ENCODE measurements at regions of chr1 and their contacts with region 1.

Region 1: GRCh38 chr1:46303038-46303871 is at the starts of genes LRRC41 and UQCRH:
- DNase-seq: peak; percentile 93
- H3K4me3 ChIP-seq: peak within 1 kb of the TSS; percentile 69 to 98 (median 94)
- H3K27ac ChIP-seq: peak within 1 kb of the TSS; percentile 92
- H3K4me1 ChIP-seq: peaks cover 24% of the 10 kb centered on the region
- H3K27me3 ChIP-seq: no peaks in the 10 kb centered on the region
- CTCF ChIP-seq: no peak
- total RNA-seq, gene LRRC41: 76.7 to 103 TPM
- total RNA-seq, gene UQCRH: 233 to 275 TPM

Region 2: DNA sequence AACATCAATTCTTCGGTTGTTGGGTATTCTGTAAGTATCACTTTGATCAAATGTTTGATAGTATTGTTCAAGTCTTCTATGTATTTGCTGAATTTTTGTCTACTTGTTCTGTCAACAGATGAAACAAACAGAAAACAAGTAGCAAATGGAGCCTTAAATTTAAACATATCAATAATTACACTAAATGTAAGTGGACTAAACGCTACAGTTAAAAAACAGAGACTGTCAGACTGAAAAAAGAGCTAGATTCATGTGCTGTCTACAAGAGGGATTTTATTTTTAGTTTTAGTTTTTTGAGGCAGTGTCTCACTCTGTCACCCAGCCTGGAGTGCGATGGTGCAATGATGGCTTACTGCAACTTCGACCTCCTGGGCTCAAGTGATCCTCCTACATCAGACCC is 66.4 kb before region 1 on chr1:
- CTCF ChIA-PET with region 1: no interaction called
- dilution Hi-C with region 1: no loop called
- in situ Hi-C with region 1: no loop called
- intact Hi-C with region 1: no loop called
- DNase-seq: no peak
- H3K4me3 ChIP-seq: no peak overlapping the region
- H3K27ac ChIP-seq: no peak overlapping the region
- H3K4me1 ChIP-seq: no peaks in the 10 kb centered on the region
- H3K27me3 ChIP-seq: no peaks in the 10 kb centered on the region
- CTCF ChIP-seq: no peak

Region 3: DNA sequence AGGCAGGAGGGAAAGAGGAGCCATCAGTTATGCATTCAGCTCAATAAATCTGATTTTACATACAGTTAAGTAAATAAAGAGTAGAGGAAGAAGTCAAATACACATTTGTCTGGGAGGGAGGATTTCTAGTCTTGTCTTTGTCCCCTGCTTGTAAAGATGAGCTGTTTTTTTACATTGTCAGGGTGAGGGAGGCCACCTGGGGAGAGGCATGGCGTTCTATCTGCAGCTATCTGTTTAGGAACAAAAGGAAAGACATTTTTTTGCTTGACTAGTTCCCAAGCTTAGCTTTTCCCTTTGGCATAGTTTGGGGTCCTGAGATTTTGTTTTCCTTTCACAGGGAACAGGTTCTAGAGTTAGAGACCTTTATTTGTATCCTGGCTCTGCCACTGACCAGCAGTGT is 40.7 kb before region 1 on chr1:
- CTCF ChIA-PET with region 1: no interaction called
- dilution Hi-C with region 1: loop called (anchors 5 kb)
- in situ Hi-C with region 1: no loop called
- intact Hi-C with region 1: no loop called
- DNase-seq: no peak
- H3K4me3 ChIP-seq: no peak overlapping the region
- H3K27ac ChIP-seq: no peak overlapping the region
- H3K4me1 ChIP-seq: no peaks in the 10 kb centered on the region
- H3K27me3 ChIP-seq: no peaks in the 10 kb centered on the region
- CTCF ChIP-seq: no peak

Measured in mammary epithelial cell (primary cell).